H1 (cell line): ENCODE measurements at regions of chr15 and their contacts with region 1.

Region 1: GRCh38 chr15:89496155-89497098 is at the start of gene RHCG:
- DNase-seq: peak; percentile 69 to 83
- H3K4me3 ChIP-seq: peak within 1 kb of the TSS; percentile 30 to 62 (median 48)
- H3K27ac ChIP-seq: no peak within 1 kb of the TSS
- H3K4me1 ChIP-seq: peaks cover 0 to 6% (median 4%) of the 10 kb centered on the region in 4 experiments; a peak in 6 of 7 replicates
- H3K27me3 ChIP-seq: peaks cover 2 to 25% (median 19%) of the 10 kb centered on the region in 4 experiments
- CTCF ChIP-seq: peak; percentile 81 to 96 (median 88)
- EP300 ChIP-seq: no peak
- POLR2A ChIP-seq: peak in 1 of 2 experiments; percentile 39; a peak in 1 of 3 replicates
- RAD21 ChIP-seq: peak; percentile 58 to 61
- total RNA-seq, gene RHCG: 0.46 TPM in 1 of 2 replicates, not detected in the other

Region 2: GRCh38 chr15:89472785-89473256 is 23.6 kb before region 1 on chr15:
- CTCF ChIA-PET with region 1: interaction called, 187 read pairs
- POLR2A ChIA-PET with region 1: interaction called, 3 read pairs
- DNase-seq: peak; percentile 79 to 95
- H3K4me3 ChIP-seq: no peak overlapping the region
- H3K27ac ChIP-seq: no peak overlapping the region
- H3K4me1 ChIP-seq: peaks cover 5 to 15% (median 11%) of the 10 kb centered on the region in 4 experiments
- H3K27me3 ChIP-seq: no peaks in the 10 kb centered on the region; a peak in 3 of 7 replicates
- CTCF ChIP-seq: peak; percentile 98 to 100 (median 99)
- EP300 ChIP-seq: no peak
- POLR2A ChIP-seq: no peak
- RAD21 ChIP-seq: peak; percentile 98 to 100

Region 3: GRCh38 chr15:89524184-89524583 is 27.8 kb after region 1 on chr15:
- CTCF ChIA-PET with region 1: interaction called, 14 read pairs
- POLR2A ChIA-PET with region 1: no interaction called
- DNase-seq: no peak
- H3K4me3 ChIP-seq: no peak overlapping the region
- H3K27ac ChIP-seq: no peak overlapping the region
- H3K4me1 ChIP-seq: no peaks in the 10 kb centered on the region
- H3K27me3 ChIP-seq: no peaks in the 10 kb centered on the region
- CTCF ChIP-seq: no peak
- EP300 ChIP-seq: no peak
- POLR2A ChIP-seq: no peak
- RAD21 ChIP-seq: no peak

Region 4: DNA sequence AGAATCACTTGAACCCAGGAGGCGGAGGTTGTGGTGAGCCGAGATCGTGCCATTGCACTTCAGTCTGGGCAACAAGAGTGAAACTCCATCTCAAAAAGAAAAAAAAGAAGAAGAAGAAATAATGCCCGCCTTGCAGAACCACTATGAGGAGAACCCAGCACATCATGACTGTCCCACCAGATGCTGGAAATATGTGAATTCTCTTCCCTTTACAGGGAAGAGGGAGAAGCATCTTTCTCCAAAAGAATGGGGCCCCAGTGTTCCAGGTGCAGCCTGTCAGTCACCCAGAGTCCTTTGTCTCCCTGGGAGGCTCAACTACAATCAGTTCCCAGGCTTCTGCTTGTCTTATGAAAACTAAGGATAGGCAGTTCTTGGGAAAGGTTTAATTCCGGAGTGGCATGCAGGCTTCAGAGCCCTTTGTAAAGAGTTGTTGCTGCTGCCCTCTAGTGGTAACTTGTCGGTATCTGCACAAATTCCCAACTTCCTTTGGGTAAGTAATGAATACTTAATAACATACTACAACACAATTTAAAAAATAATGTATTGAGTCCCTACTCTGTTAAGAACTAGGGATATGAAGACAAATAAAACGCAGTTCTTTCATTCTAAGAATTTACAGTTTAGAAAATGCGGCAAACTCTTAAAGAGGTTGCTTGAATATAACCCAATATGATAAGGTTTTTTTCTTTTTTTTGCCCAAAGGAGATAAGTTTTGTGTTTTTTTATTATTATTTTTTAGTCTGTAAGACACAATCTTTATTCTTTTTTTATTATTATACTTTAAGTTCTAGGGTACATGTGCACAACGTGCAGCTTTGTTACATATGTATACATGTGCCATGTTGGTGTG is 60.2 kb after region 1 on chr15:
- CTCF ChIA-PET with region 1: interaction called, 126 read pairs
- POLR2A ChIA-PET with region 1: no interaction called
- DNase-seq: peak; percentile 39 to 78
- H3K4me3 ChIP-seq: no peak overlapping the region
- H3K27ac ChIP-seq: no peak overlapping the region
- H3K4me1 ChIP-seq: no peaks in the 10 kb centered on the region
- H3K27me3 ChIP-seq: no peaks in the 10 kb centered on the region
- CTCF ChIP-seq: peak in 2 of 3 experiments; percentile 74 to 77; a peak in 3 of 4 replicates
- EP300 ChIP-seq: no peak
- POLR2A ChIP-seq: no peak
- RAD21 ChIP-seq: peak; percentile 68 to 77

Region 5: DNA sequence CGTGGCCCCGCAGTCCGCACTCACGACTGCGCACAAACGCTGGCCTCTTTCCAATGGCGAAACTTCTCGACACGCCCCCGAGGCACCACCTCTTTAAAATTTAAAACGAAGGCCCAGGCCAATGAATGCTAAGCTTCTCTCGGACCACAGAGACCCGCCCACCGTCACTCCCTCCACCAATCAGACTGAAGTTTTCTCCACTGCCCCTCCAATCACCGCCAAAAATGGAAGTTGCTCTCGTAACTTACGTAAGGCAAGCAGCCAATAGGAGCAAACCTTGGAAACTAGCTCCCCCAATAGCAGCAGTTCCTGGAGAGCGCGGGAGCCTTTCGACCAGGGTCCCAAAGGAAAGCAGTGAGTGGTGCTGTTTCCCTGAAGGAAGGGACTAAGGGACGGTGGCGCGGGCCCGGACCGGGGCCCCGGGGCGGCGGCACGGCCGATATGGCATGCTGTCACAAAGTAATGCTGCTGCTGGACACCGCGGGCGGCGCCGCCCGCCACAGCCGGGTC is 78.8 kb after region 1 on chr15 and contains the start of gene TICRR:
- CTCF ChIA-PET with region 1: interaction called, 14 read pairs
- POLR2A ChIA-PET with region 1: interaction called, 5 read pairs
- DNase-seq: peak; percentile 93 to 97
- H3K4me3 ChIP-seq: peak within 1 kb of the TSS; percentile 84 to 98 (median 90)
- H3K27ac ChIP-seq: peak within 1 kb of the TSS; percentile 27
- H3K4me1 ChIP-seq: peaks cover 0 to 5% (median 4%) of the 10 kb centered on the region in 4 experiments; a peak in 3 of 7 replicates
- H3K27me3 ChIP-seq: no peaks in the 10 kb centered on the region
- CTCF ChIP-seq: no peak
- EP300 ChIP-seq: no peak
- POLR2A ChIP-seq: peak; percentile 91 to 94
- RAD21 ChIP-seq: no peak
- total RNA-seq, gene TICRR: 34.8 and 37.3 TPM in 2 replicates